Mammary epithelial cell (primary cell): ENCODE measurements at regions of chr2 and their contacts with region 1.

Region 1: GRCh38 chr2:196535742-196536141 is 103.8 kb upstream of the CCDC150 start:
- DNase-seq: no peak
- H3K4me3 ChIP-seq: no peak overlapping the region
- H3K27ac ChIP-seq: no peak overlapping the region
- H3K4me1 ChIP-seq: no peaks in the 10 kb centered on the region
- H3K27me3 ChIP-seq: peaks cover 4% of the 10 kb centered on the region
- CTCF ChIP-seq: peak in 1 of 2 donors; percentile 17

Region 2: GRCh38 chr2:196607073-196607472 is 71.3 kb after region 1 on chr2:
- CTCF ChIA-PET with region 1: no interaction called
- dilution Hi-C with region 1: no loop called
- in situ Hi-C with region 1: no loop called
- intact Hi-C with region 1: no loop called
- DNase-seq: no peak
- H3K4me3 ChIP-seq: no peak overlapping the region
- H3K27ac ChIP-seq: no peak overlapping the region
- H3K4me1 ChIP-seq: peaks cover 11% of the 10 kb centered on the region
- H3K27me3 ChIP-seq: no peaks in the 10 kb centered on the region
- CTCF ChIP-seq: no peak

Region 3: GRCh38 chr2:196750982-196751635 is 215.4 kb after region 1 on chr2:
- CTCF ChIA-PET with region 1: no interaction called
- dilution Hi-C with region 1: no loop called
- in situ Hi-C with region 1: no loop called
- intact Hi-C with region 1: loop called (anchors 10 kb)
- DNase-seq: peak; percentile 50
- H3K4me3 ChIP-seq: no peak overlapping the region
- H3K27ac ChIP-seq: no peak overlapping the region
- H3K4me1 ChIP-seq: no peaks in the 10 kb centered on the region
- H3K27me3 ChIP-seq: no peaks in the 10 kb centered on the region
- CTCF ChIP-seq: peak; percentile 84 to 94